ENCODE measurements at regions of chrX and their contacts with region 1.

Region 1: DNA sequence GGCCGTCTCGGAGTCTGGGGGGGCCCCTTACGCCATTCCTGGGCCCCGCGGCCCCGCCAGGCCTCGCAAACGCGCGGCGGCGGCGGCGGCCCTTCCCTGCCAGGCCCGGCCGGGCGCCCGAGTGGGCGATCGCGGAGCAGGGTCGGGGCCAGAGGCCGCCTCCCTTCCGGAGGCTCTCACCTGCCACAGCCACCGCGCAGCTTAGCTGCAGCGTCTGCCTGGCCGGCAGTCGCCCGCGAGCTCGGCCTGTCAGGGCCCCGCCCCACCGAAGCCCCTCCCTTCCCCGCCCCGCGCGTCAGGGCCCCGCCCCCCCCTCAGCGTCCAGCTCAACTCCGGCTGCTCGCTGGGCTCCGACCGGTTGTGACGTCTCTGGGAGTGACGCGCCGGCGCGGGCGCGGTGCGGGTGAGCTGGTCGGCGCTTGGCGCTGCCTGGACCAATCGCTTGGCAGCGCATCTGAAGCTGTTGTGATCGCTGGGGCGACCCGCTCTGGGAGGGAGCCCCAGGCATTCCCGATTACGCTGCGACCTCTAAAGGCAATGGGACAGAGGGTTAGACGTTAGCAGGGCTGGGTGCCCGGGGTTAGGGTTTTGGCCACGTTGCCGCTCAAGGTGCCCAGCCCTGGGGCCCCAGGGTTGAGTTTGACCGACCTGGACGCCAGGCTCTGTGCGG is at the start of gene SLC10A3:
- DNase-seq: peak; percentile 84 to 92 (median 87)
- H3K4me3 ChIP-seq: peak within 1 kb of the TSS; percentile 66
- H3K4me3 Mint-ChIP-seq: peak within 1 kb of the TSS; percentile 86 to 94 (median 91)
- H3K27ac ChIP-seq: peak within 1 kb of the TSS; percentile 81
- H3K27ac Mint-ChIP-seq: peak within 1 kb of the TSS; percentile 88 to 96 (median 94)
- H3K4me1 ChIP-seq: peaks cover 10% of the 10 kb centered on the region
- H3K4me1 Mint-ChIP-seq: peaks cover 12 to 31% (median 14%) of the 10 kb centered on the region in 3 donors
- H3K27me3 ChIP-seq: no peaks in the 10 kb centered on the region
- H3K27me3 Mint-ChIP-seq: no peaks in the 10 kb centered on the region
- total RNA-seq, gene SLC10A3: 40.8 to 45.7 TPM

Region 2: GRCh38 chrX:154074199-154074598 is 416.4 kb before region 1 on chrX:
- CTCF ChIA-PET with region 1: no interaction called
- POLR2A ChIA-PET with region 1: interaction called, 10 read pairs
- DNase-seq: no peak
- H3K4me3 ChIP-seq: no peak overlapping the region
- H3K4me3 Mint-ChIP-seq: peak overlapping the region in 1 of 7 donors; percentile 40
- H3K27ac ChIP-seq: no peak overlapping the region
- H3K27ac Mint-ChIP-seq: peak overlapping the region in 4 of 8 donors; percentile 13 to 77 (median 38)
- H3K4me1 ChIP-seq: peaks cover 35% of the 10 kb centered on the region
- H3K4me1 Mint-ChIP-seq: peaks cover 40 to 76% (median 57%) of the 10 kb centered on the region in 3 donors
- H3K27me3 ChIP-seq: no peaks in the 10 kb centered on the region
- H3K27me3 Mint-ChIP-seq: peaks cover 0 to 18% of the 10 kb centered on the region in 2 donors

Region 3: GRCh38 chrX:154515878-154516655 is 25.5 kb after region 1 on chrX and contains the start of gene FAM3A:
- CTCF ChIA-PET with region 1: interaction called, 3 read pairs
- POLR2A ChIA-PET with region 1: interaction called, 16 read pairs
- DNase-seq: peak; percentile 88 to 95 (median 89)
- H3K4me3 ChIP-seq: peak within 1 kb of the TSS; percentile 67
- H3K4me3 Mint-ChIP-seq: peak within 1 kb of the TSS; percentile 80 to 91 (median 86)
- H3K27ac ChIP-seq: peak within 1 kb of the TSS; percentile 67
- H3K27ac Mint-ChIP-seq: peak within 1 kb of the TSS; percentile 87 to 97 (median 92)
- H3K4me1 ChIP-seq: peaks cover 25% of the 10 kb centered on the region
- H3K4me1 Mint-ChIP-seq: peaks cover 19 to 32% (median 23%) of the 10 kb centered on the region in 3 donors
- H3K27me3 ChIP-seq: no peaks in the 10 kb centered on the region
- H3K27me3 Mint-ChIP-seq: peaks cover 0 to 3% of the 10 kb centered on the region in 2 donors
- total RNA-seq, gene FAM3A: 28.4 to 29.4 TPM